ENCODE measurements at regions of chr10 and their contacts with region 1.

Region 1: DNA sequence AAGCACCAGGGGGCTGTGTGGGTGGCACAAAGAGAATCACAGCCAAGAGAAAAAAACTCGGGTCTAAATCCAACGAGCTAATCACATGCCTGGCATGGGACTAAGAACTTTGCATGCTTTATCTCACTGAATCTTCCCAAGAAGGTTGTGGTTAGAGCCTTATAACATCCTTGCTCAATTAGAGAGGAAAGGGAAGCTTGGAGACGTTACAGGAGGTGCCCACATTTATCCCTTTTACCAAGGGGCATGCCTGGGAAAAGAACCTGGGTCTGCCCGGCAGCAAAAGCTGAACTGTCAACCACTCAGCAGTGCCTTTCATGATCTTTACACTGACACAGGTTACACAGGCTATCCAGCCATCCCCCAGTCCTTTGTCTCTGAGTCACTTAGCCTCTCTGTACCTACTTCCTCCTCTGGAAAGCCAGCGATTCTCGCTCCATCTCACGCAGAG is 190.1 kb downstream of the PRPF18 start:
- DNase-seq: no peak
- ATAC-seq: peak; percentile 74
- H3K4me3 Mint-ChIP-seq: no peak overlapping the region
- H3K27ac Mint-ChIP-seq: no peak overlapping the region
- H3K4me1 Mint-ChIP-seq: peaks cover 41% of the 10 kb centered on the region
- H3K27me3 Mint-ChIP-seq: peaks cover 25% of the 10 kb centered on the region
- CTCF ChIP-seq: no peak

Region 2: GRCh38 chr10:13371897-13372470 is 404.9 kb before region 1 on chr10:
- CTCF ChIA-PET with region 1: no interaction called
- POLR2A ChIA-PET with region 1: interaction called, 3 read pairs
- intact Hi-C with region 1: loop called (anchors 1 kb)
- DNase-seq: peak; percentile 33
- ATAC-seq: peak; percentile 97
- H3K4me3 Mint-ChIP-seq: no peak overlapping the region
- H3K27ac Mint-ChIP-seq: no peak overlapping the region
- H3K4me1 Mint-ChIP-seq: no peaks in the 10 kb centered on the region
- H3K27me3 Mint-ChIP-seq: peaks cover 2% of the 10 kb centered on the region
- CTCF ChIP-seq: peak; percentile 77

Region 3: GRCh38 chr10:13613519-13613918 is 163.4 kb before region 1 on chr10:
- CTCF ChIA-PET with region 1: no interaction called
- POLR2A ChIA-PET with region 1: interaction called, 5 read pairs
- intact Hi-C with region 1: loop called (anchors 1 kb)
- DNase-seq: no peak
- ATAC-seq: no peak
- H3K4me3 Mint-ChIP-seq: no peak overlapping the region
- H3K27ac Mint-ChIP-seq: no peak overlapping the region
- H3K4me1 Mint-ChIP-seq: no peaks in the 10 kb centered on the region
- H3K27me3 Mint-ChIP-seq: no peaks in the 10 kb centered on the region
- CTCF ChIP-seq: no peak

Region 4: GRCh38 chr10:13712837-13713581 is 63.9 kb before region 1 on chr10:
- CTCF ChIA-PET with region 1: interaction called, 5 read pairs
- POLR2A ChIA-PET with region 1: interaction called, 4 read pairs
- intact Hi-C with region 1: loop called (anchors 2 kb)
- DNase-seq: peak; percentile 47
- ATAC-seq: peak; percentile 90
- H3K4me3 Mint-ChIP-seq: peak overlapping the region; percentile 72
- H3K27ac Mint-ChIP-seq: peak overlapping the region; percentile 97
- H3K4me1 Mint-ChIP-seq: peaks cover 28% of the 10 kb centered on the region
- H3K27me3 Mint-ChIP-seq: no peaks in the 10 kb centered on the region
- CTCF ChIP-seq: no peak